K562 (cell line): ENCODE measurements at regions of chr10 and their contacts with region 1.

Region 1: GRCh38 chr10:6163364-6164270 is 39.1 kb upstream of the PFKFB3 start:
- DNase-seq: peak; percentile 93 to 97 (median 97)
- ATAC-seq: peak; percentile 92
- H3K4me3 ChIP-seq: peak overlapping the region; percentile 80
- H3K27ac ChIP-seq: peak overlapping the region; percentile 92
- H3K4me1 ChIP-seq: peaks cover 19 to 38% of the 10 kb centered on the region in 2 experiments
- H3K27me3 ChIP-seq: no peaks in the 10 kb centered on the region
- CTCF ChIP-seq: no peak
- EP300 ChIP-seq: peak; percentile 79
- POLR2A ChIP-seq: peak; percentile 83
- RAD21 ChIP-seq: no peak

Region 2: DNA sequence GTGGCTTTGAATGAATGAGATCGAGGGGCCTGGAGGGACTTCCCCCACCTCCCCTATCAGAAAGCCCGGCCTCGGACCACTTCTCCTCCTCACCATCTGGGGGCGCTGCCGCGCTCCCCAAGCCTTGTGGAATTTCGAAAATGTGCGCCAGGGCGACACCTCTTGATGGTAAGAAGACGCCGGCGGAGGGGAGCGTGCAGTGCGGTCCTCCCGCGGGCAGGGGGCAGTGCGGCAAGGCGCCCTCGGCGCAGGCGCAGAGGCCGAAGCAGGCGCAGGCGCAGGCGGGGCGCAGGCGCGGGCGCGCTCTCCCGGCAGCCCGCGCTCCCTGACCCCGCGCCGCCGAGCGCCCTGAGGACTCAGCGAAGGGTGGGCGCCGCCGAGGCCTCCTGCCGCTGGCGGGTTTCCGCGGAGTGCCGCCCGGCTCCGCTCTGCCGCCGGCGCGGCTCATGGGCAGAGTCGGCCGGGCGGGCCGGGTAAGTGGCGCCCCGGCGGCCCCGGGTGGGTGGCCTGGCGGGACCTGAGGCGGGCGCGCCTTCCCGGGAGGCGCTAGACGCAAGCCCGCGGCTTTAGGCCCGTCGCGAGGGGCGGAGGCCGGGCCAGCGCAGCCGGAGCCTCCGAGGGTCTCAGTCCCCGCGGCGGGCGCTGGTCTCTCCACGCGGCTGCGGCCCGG is 74.8 kb before region 1 on chr10 and contains the start of gene RBM17:
- CTCF ChIA-PET with region 1: no interaction called
- POLR2A ChIA-PET with region 1: no interaction called
- in situ Hi-C with region 1: no loop called
- intact Hi-C with region 1: loop called (anchors 5 kb)
- DNase-seq: peak; percentile 93 to 97 (median 95)
- ATAC-seq: peak; percentile 93
- H3K4me3 ChIP-seq: peak within 1 kb of the TSS; percentile 98
- H3K27ac ChIP-seq: peak within 1 kb of the TSS; percentile 89
- H3K4me1 ChIP-seq: peaks cover 14 to 17% of the 10 kb centered on the region in 2 experiments; a peak in 4 of 5 replicates
- H3K27me3 ChIP-seq: peaks cover 4% of the 10 kb centered on the region in 2 experiments; a peak in 4 of 5 replicates
- CTCF ChIP-seq: peak; percentile 100
- EP300 ChIP-seq: no peak; the same call in 1 of the 2 replicates
- POLR2A ChIP-seq: no peak
- RAD21 ChIP-seq: peak; percentile 92 to 93
- polyA plus RNA-seq, gene RBM17: 23.6 to 25.8 TPM

Region 3: DNA sequence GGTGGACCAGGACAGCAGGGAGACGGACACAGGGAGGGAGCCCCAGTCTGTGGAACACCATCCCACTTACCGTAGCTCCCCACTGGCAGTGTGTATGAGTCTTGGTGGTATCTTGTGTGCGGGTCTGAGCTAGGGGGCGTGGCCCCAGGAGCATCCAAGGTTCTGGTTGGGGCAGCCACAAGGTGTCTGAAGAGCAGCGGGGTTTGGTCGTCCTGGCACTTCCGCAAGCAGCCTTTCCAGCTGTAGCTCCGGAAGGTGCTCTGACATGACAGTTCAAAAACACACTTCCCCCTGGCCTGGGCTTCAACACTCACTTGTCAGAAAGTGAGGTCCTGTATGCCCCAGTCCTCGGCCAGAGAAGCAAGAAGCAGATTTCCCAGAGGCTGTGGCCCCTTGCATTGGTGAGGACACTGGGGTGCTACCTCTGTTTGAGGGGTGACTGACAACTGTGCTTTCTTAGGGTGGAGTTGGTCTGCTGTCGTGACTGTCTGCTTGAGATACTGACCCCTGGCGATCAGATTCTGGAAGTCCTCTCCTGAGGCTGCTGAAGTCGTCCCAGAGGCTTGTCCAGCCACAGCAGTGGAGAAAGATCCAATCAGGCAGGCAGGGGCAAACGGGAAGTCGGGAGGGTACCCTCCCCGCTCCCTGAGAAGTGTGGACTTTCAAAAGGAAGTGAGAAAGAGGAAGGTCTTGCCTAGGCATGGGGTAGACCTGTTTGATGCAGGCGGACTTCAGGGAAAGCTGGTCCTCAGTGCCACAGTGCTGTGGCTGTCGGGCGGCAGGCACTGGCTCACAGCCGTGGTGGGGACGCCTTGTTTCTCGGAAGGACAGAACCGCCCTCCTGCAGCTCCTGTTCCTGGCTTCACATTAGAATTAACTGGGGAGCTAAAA is 12.3 kb before region 1 on chr10:
- CTCF ChIA-PET with region 1: no interaction called
- POLR2A ChIA-PET with region 1: interaction called, 38 read pairs
- in situ Hi-C with region 1: no loop called
- intact Hi-C with region 1: no loop called
- DNase-seq: peak; percentile 47 to 80 (median 59)
- ATAC-seq: peak; percentile 93
- H3K4me3 ChIP-seq: no peak overlapping the region
- H3K27ac ChIP-seq: peak overlapping the region; percentile 26; the same call in 2 of the 3 replicates
- H3K4me1 ChIP-seq: peaks cover 13 to 32% of the 10 kb centered on the region in 2 experiments
- H3K27me3 ChIP-seq: no peaks in the 10 kb centered on the region
- CTCF ChIP-seq: peak; percentile 74 to 92 (median 79)
- EP300 ChIP-seq: no peak
- POLR2A ChIP-seq: no peak
- RAD21 ChIP-seq: peak; percentile 57 to 63

Region 4: DNA sequence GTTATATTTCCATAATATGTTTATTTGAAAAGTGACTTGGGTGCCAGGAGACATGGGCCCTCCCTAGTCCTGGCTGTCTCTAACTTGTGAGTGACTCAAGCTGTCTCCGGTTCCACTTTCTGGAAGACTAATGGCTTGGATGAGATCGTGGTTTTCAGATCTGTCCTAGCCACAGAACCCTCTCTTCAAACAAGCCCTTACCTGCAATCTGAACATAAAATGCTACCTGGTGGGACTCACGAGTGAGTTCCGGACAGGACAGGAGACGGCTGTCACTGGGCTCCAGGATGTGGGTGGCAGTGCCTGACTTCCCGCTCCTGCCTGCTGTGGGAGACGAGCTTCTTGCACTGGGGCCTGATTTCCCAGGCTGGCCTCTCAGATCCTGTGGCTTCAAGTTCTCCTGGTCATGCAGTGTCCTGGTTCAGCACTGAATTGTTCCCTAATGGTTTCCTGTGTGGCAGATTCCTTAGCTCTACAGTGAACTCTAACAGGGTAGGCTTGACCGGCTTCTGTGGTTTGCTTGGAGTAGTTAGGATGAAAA is 13.1 kb after region 1 on chr10:
- CTCF ChIA-PET with region 1: no interaction called
- POLR2A ChIA-PET with region 1: interaction called, 11 read pairs
- in situ Hi-C with region 1: no loop called
- intact Hi-C with region 1: no loop called
- DNase-seq: no peak
- ATAC-seq: peak; percentile 23; the same call in 2 of the 3 replicates
- H3K4me3 ChIP-seq: no peak overlapping the region
- H3K27ac ChIP-seq: no peak overlapping the region
- H3K4me1 ChIP-seq: peaks cover 0 to 24% of the 10 kb centered on the region in 2 experiments; a peak in 2 of 5 replicates
- H3K27me3 ChIP-seq: no peaks in the 10 kb centered on the region
- CTCF ChIP-seq: no peak
- EP300 ChIP-seq: no peak
- POLR2A ChIP-seq: no peak
- RAD21 ChIP-seq: no peak